ENCODE measurements at regions of chr12 and their contacts with region 1.

Region 1: DNA sequence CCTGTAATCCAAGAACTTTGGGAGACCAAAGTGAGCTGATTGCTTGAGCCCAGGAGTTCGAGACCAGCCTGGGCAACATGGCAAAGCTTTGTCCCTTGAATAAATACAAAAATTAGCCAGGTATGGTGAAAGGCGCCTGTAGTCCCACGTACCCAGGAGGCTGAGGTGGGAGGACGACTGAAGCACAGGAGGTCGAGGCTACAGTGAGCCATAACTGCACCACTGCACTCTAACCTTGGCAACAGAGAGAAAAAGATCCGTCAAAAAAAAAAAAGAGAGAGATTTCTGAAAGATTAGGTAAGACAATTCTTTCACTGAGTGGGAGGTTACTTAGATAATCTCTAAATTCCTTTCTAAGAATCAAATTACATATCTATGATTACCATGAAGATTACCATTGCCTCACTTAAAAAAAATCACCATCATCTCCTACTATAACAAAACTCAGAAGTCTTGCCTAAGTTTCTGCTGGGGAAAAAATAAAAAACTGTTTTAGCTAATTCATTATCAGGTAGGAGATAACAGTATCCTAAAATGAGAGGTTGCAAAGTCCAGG is 366.7 kb downstream of the DUSP6 start:
- DNase-seq: no peak
- ATAC-seq: no peak
- H3K4me3 ChIP-seq: no peak overlapping the region
- H3K27ac ChIP-seq: no peak overlapping the region
- H3K4me1 ChIP-seq: no peaks in the 10 kb centered on the region
- H3K27me3 ChIP-seq: no peaks in the 10 kb centered on the region

Region 2: GRCh38 chr12:88156075-88156654 is 829.4 kb before region 1 on chr12:
- intact Hi-C with region 1: loop called in 1 of 2 experiments (anchors 5 kb)
- DNase-seq: no peak
- ATAC-seq: no peak
- H3K4me3 ChIP-seq: no peak overlapping the region
- H3K27ac ChIP-seq: no peak overlapping the region
- H3K4me1 ChIP-seq: no peaks in the 10 kb centered on the region
- H3K27me3 ChIP-seq: no peaks in the 10 kb centered on the region

Region 3: GRCh38 chr12:88743946-88744685 is 241.4 kb before region 1 on chr12:
- intact Hi-C with region 1: no loop called
- DNase-seq: no peak
- ATAC-seq: no peak
- H3K4me3 ChIP-seq: no peak overlapping the region
- H3K27ac ChIP-seq: no peak overlapping the region
- H3K4me1 ChIP-seq: no peaks in the 10 kb centered on the region
- H3K27me3 ChIP-seq: no peaks in the 10 kb centered on the region

Region 4: DNA sequence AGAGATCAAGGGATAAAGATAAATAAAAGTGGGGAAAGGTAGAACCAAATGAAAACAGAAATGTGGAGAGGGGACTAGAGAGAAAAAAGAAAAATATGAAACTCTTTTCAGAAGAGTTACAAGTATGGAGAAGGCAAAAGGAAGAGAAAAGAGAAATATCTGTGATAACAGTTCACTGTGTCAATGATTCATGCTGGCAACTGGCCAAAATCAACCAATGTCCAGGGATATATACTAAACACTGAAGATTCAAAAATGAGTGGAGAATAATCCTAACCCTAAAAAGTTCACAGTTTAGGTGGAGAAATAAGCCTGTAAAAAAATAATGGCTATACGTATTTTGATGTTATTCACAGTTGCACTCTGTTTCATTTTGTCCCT is 33.0 kb before region 1 on chr12:
- intact Hi-C with region 1: no loop called
- DNase-seq: no peak
- ATAC-seq: no peak
- H3K4me3 ChIP-seq: no peak overlapping the region
- H3K27ac ChIP-seq: no peak overlapping the region
- H3K4me1 ChIP-seq: no peaks in the 10 kb centered on the region
- H3K27me3 ChIP-seq: no peaks in the 10 kb centered on the region